Activated CD4-positive, alpha-beta T cell treated with anti-CD3 and anti-CD28 coated beads, Interleukin-2, amount 10 ng/mL, durations not matched to agents 24 days and 14 days (primary cell): ENCODE measurements at regions of chr4 and their contacts with region 1.

Region 1: GRCh38 chr4:40719008-40719623 is 30.6 kb upstream of the NSUN7 start:
- DNase-seq: peak; percentile 70
- H3K4me3 Mint-ChIP-seq: no peak overlapping the region
- H3K27ac Mint-ChIP-seq: peak overlapping the region; percentile 4
- H3K4me1 Mint-ChIP-seq: peaks cover 35% of the 10 kb centered on the region
- H3K27me3 Mint-ChIP-seq: no peaks in the 10 kb centered on the region

Region 2: GRCh38 chr4:40199999-40200874 is 518.9 kb before region 1 on chr4:
- intact Hi-C with region 1: loop called (anchors 5 kb)
- DNase-seq: peak; percentile 93
- H3K4me3 Mint-ChIP-seq: peak overlapping the region; percentile 93
- H3K27ac Mint-ChIP-seq: peak overlapping the region; percentile 94
- H3K4me1 Mint-ChIP-seq: peaks cover 44% of the 10 kb centered on the region
- H3K27me3 Mint-ChIP-seq: no peaks in the 10 kb centered on the region

Region 3: GRCh38 chr4:40438384-40439026 is 280.6 kb before region 1 on chr4:
- intact Hi-C with region 1: loop called (anchors 10 kb)
- DNase-seq: no peak
- H3K4me3 Mint-ChIP-seq: peak overlapping the region; percentile 33
- H3K27ac Mint-ChIP-seq: no peak overlapping the region
- H3K4me1 Mint-ChIP-seq: peaks cover 51% of the 10 kb centered on the region
- H3K27me3 Mint-ChIP-seq: no peaks in the 10 kb centered on the region

Region 4: GRCh38 chr4:40525811-40526598 is 193.1 kb before region 1 on chr4:
- intact Hi-C with region 1: no loop called
- DNase-seq: no peak
- H3K4me3 Mint-ChIP-seq: no peak overlapping the region
- H3K27ac Mint-ChIP-seq: no peak overlapping the region
- H3K4me1 Mint-ChIP-seq: peaks cover 2% of the 10 kb centered on the region
- H3K27me3 Mint-ChIP-seq: no peaks in the 10 kb centered on the region

Region 5: DNA sequence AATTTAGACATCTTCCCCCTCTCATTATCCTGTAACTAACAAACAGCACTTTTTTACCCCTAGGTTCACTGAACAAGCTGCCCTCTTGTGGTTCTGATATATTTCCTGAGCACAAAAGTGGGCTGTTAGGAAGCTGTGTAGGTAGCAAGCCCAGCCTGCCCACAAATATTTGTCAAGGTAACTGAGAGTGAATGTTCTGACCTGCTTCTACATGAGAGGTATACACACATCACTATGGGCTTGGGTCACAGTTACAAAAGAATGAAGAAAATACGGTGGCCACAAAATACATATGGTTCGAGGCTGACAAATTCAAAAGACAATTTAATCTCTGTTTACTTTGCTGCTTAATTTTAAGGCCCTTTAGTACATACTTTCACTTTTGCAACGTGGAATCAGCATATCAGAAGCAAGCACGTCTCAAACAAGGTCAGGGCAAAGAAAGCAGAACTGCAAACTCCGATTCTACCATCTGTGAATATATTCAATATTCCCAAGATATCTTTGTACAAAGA is 168.1 kb before region 1 on chr4:
- intact Hi-C with region 1: loop called (anchors 2 kb)
- DNase-seq: peak; percentile 82
- H3K4me3 Mint-ChIP-seq: peak overlapping the region; percentile 84
- H3K27ac Mint-ChIP-seq: peak overlapping the region; percentile 84
- H3K4me1 Mint-ChIP-seq: peaks cover 40% of the 10 kb centered on the region
- H3K27me3 Mint-ChIP-seq: no peaks in the 10 kb centered on the region

Region 6: GRCh38 chr4:40662962-40663604 is 56.0 kb before region 1 on chr4:
- intact Hi-C with region 1: loop called (anchors 1 kb)
- DNase-seq: no peak
- H3K4me3 Mint-ChIP-seq: peak overlapping the region; percentile 36
- H3K27ac Mint-ChIP-seq: peak overlapping the region; percentile 93
- H3K4me1 Mint-ChIP-seq: peaks cover 29% of the 10 kb centered on the region
- H3K27me3 Mint-ChIP-seq: no peaks in the 10 kb centered on the region

Region 7: GRCh38 chr4:40687676-40688389 is 31.3 kb before region 1 on chr4:
- intact Hi-C with region 1: loop called (anchors 1 kb)
- DNase-seq: no peak
- H3K4me3 Mint-ChIP-seq: peak overlapping the region; percentile 50
- H3K27ac Mint-ChIP-seq: peak overlapping the region; percentile 94
- H3K4me1 Mint-ChIP-seq: peaks cover 20% of the 10 kb centered on the region
- H3K27me3 Mint-ChIP-seq: no peaks in the 10 kb centered on the region